ENCODE measurements at regions of chr15 and their contacts with region 1.

Region 1: DNA sequence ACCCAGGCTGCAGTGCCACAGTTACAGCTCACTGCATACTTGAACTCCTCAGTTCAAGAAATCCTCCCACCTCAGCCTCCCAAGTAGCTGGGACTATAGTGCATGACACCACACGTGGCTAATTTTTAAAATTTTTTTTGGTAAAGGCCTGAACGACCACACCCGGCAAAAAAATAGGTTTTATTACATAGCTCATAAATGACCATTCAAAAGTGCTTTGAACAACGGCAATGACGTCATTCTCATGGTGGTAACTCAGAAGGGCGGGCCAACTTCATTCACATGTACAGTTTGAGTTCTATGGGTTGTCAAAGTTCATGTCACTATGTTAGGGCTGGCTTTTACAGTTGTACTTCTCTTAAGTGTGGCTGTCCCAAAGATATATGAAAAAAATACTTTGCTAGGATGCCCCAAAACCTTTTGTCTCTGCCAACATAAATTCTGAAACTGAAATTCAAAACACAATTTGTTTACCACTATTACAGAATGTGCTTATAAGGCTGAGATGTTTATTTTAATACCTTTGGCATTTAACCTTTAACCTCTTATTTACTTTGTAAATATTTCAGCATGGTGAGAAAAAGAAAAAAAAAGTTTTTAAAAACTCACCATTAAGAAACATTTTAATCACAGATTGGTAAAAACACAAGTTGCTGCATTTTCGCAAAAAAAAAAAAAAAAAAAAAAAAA is 6.2 kb downstream of the MYO1E start:
- DNase-seq: no peak
- ATAC-seq: peak in 3 of 4 donors; percentile 40 to 79 (median 49)
- H3K4me3 ChIP-seq: no peak overlapping the region
- H3K27ac ChIP-seq: peak overlapping the region in 1 of 12 donors; percentile 18
- H3K4me1 ChIP-seq: peaks cover 0 to 53% (median 11%) of the 10 kb centered on the region in 12 donors
- H3K27me3 ChIP-seq: no peaks in the 10 kb centered on the region
- CTCF ChIP-seq: no peak
- POLR2A ChIP-seq: no peak

Region 2: GRCh38 chr15:59221511-59222505 is 144.7 kb before region 1 on chr15:
- intact Hi-C with region 1: no loop called
- DNase-seq: no peak
- ATAC-seq: peak in 1 of 4 donors; percentile 38
- H3K4me3 ChIP-seq: no peak overlapping the region
- H3K27ac ChIP-seq: peak overlapping the region in 1 of 12 donors; percentile 15
- H3K4me1 ChIP-seq: peaks cover 0 to 39% (median 21%) of the 10 kb centered on the region in 12 donors
- H3K27me3 ChIP-seq: no peaks in the 10 kb centered on the region
- CTCF ChIP-seq: no peak
- POLR2A ChIP-seq: no peak

Region 3: DNA sequence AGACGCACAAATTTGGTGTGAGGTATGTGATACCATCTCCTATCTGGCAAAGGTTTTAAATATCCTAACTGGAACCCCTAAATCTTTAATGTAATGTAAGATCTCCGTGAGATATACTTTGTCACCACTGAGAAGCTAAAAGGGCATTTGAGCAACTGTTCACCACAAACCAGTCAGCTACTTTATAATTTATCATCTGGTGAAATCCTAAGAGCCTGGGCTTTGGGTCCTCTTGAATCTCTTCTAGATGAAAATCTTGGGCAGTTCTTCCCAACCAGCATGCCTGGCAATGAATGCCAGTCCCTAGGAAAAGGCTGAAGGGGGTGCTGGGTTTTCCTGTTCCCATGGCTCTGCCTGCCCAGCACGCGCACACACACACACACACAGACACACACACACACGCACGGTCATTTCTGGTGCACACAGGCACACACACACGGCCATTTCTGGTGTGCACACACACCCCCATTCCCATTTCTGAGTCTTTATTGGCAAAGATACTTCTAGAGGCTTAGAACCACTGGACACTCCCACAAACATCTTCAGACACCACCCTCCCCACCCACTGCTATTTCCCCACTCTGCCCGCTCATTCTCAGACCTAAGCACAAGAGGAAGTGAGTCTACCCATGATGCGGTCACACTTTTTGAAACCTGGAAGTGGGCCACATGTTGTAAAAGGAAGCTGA is 66.4 kb before region 1 on chr15:
- intact Hi-C with region 1: loop called in 1 of 10 experiments (anchors 5 kb)
- DNase-seq: peak in 4 of 5 donors; percentile 65 to 77 (median 69)
- ATAC-seq: peak; percentile 53 to 97 (median 94)
- H3K4me3 ChIP-seq: peak overlapping the region in 4 of 12 donors; percentile 0 to 23 (median 10)
- H3K27ac ChIP-seq: peak overlapping the region in 9 of 12 donors; percentile 4 to 82 (median 24)
- H3K4me1 ChIP-seq: peaks cover 0 to 57% (median 21%) of the 10 kb centered on the region in 12 donors
- H3K27me3 ChIP-seq: no peaks in the 10 kb centered on the region
- CTCF ChIP-seq: no peak
- POLR2A ChIP-seq: no peak

Region 4: GRCh38 chr15:60255390-60255789 is 888.9 kb after region 1 on chr15:
- intact Hi-C with region 1: no loop called
- DNase-seq: no peak
- ATAC-seq: no peak
- H3K4me3 ChIP-seq: no peak overlapping the region
- H3K27ac ChIP-seq: no peak overlapping the region
- H3K4me1 ChIP-seq: peaks cover 0 to 4% (median 0%) of the 10 kb centered on the region in 12 donors
- H3K27me3 ChIP-seq: peaks cover 0 to 27% (median 3%) of the 10 kb centered on the region in 9 donors
- CTCF ChIP-seq: no peak
- POLR2A ChIP-seq: no peak

Measured in heart left ventricle (tissue), 16 donors.